ENCODE measurements at regions of chr6 and their contacts with region 1.

Region 1: GRCh38 chr6:129748212-129748900 is 38.4 kb upstream of the ARHGAP18 start:
- DNase-seq: peak in 1 of 2 donors; percentile 23
- H3K4me3 ChIP-seq: no peak overlapping the region
- H3K27ac ChIP-seq: no peak overlapping the region
- H3K4me1 ChIP-seq: peaks cover 0 to 26% (median 9%) of the 10 kb centered on the region in 4 donors
- H3K27me3 ChIP-seq: no peaks in the 10 kb centered on the region
- CTCF ChIP-seq: no peak

Region 2: GRCh38 chr6:129766959-129767728 is 18.8 kb after region 1 on chr6:
- intact Hi-C with region 1: loop called (anchors 2 kb)
- DNase-seq: peak in 1 of 2 donors; percentile 25
- H3K4me3 ChIP-seq: peak overlapping the region; percentile 30 to 39
- H3K27ac ChIP-seq: no peak overlapping the region
- H3K4me1 ChIP-seq: peaks cover 0 to 10% (median 4%) of the 10 kb centered on the region in 4 donors
- H3K27me3 ChIP-seq: peaks cover 0 to 12% of the 10 kb centered on the region in 2 donors
- CTCF ChIP-seq: no peak